Transverse colon (tissue), 4 donors: ENCODE measurements at regions of chr11 and their contacts with region 1.

Region 1: GRCh38 chr11:87352759-87353707 is 315.3 kb downstream of the TMEM135 start:
- DNase-seq: peak; percentile 89
- H3K4me3 ChIP-seq: no peak overlapping the region
- H3K27ac ChIP-seq: no peak overlapping the region
- H3K4me1 ChIP-seq: peaks cover 0 to 22% (median 3%) of the 10 kb centered on the region in 4 donors
- H3K27me3 ChIP-seq: no peaks in the 10 kb centered on the region
- CTCF ChIP-seq: peak; percentile 97 to 100 (median 99)
- EP300 ChIP-seq: no peak
- POLR2A ChIP-seq: no peak

Region 2: GRCh38 chr11:87421422-87421821 is 68.4 kb after region 1 on chr11:
- in situ Hi-C with region 1: loop called (anchors 5 to 10 kb)
- intact Hi-C with region 1: loop called (anchors 5 kb)
- DNase-seq: peak; percentile 22
- H3K4me3 ChIP-seq: no peak overlapping the region
- H3K27ac ChIP-seq: no peak overlapping the region
- H3K4me1 ChIP-seq: peaks cover 0 to 4% (median 0%) of the 10 kb centered on the region in 4 donors
- H3K27me3 ChIP-seq: no peaks in the 10 kb centered on the region
- CTCF ChIP-seq: peak; percentile 77 to 84 (median 79)
- EP300 ChIP-seq: no peak
- POLR2A ChIP-seq: no peak

Region 3: DNA sequence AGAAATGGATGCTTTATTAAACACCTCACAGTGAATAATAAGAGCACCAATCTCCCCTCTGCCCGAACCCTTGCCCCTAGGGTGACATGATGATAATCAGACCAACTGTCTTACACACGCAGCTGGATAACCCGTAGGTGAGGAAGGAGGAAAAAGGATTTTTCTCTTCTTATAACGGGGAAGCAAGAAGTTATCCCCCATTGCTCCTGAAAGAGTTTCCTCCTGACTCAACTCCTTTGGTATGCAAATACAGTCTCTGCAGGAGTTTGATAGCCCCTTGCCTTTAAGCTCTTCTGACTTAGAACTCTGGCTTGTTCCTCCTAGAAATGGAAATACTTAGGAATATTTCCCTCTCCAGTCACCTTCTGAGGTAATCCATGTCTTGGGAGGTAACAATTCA is 140.5 kb after region 1 on chr11:
- in situ Hi-C with region 1: no loop called
- intact Hi-C with region 1: no loop called
- DNase-seq: no peak
- H3K4me3 ChIP-seq: no peak overlapping the region
- H3K27ac ChIP-seq: no peak overlapping the region
- H3K4me1 ChIP-seq: no peaks in the 10 kb centered on the region
- H3K27me3 ChIP-seq: no peaks in the 10 kb centered on the region
- CTCF ChIP-seq: no peak
- EP300 ChIP-seq: no peak
- POLR2A ChIP-seq: no peak

Region 4: DNA sequence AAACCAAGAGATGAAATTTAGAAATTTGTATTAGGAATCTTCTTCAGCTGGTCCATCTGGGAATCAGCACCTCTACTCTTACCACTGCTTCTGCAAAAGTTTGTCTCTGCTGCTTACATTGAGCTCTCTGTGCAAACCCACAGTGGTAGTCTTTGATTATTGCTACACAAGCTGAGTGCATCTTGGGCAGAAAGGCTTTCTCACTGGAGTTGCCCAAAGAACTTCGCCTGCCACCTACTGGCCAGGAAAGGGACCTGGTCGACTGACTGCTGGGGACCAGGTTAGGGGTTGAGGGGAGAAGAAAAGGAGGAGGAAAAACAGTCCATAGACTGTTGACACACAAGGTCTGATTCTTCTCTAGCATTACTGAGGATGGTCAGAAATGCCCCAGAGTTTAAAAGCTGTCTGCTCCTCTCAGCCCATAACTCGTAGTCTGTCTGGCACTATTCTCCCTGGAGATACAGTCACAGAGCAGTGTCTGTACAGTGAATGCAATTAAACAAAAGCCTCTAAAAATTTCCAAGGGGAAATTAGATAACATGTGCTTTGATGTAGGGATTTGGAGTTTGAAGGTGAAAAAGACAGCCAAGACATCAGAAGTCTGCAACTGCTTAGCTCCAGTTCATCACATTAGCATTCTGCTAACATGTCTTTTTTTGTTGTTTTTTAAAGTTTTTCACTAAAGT is 1199.5 kb after region 1 on chr11:
- in situ Hi-C with region 1: loop called in 1 of 4 experiments (anchors 25 kb)
- intact Hi-C with region 1: no loop called
- DNase-seq: peak; percentile 42
- H3K4me3 ChIP-seq: no peak overlapping the region
- H3K27ac ChIP-seq: no peak overlapping the region
- H3K4me1 ChIP-seq: no peaks in the 10 kb centered on the region
- H3K27me3 ChIP-seq: no peaks in the 10 kb centered on the region
- CTCF ChIP-seq: peak; percentile 23 to 53 (median 37)
- EP300 ChIP-seq: no peak
- POLR2A ChIP-seq: no peak